ENCODE measurements at regions of chr14 and their contacts with region 1.

Region 1: DNA sequence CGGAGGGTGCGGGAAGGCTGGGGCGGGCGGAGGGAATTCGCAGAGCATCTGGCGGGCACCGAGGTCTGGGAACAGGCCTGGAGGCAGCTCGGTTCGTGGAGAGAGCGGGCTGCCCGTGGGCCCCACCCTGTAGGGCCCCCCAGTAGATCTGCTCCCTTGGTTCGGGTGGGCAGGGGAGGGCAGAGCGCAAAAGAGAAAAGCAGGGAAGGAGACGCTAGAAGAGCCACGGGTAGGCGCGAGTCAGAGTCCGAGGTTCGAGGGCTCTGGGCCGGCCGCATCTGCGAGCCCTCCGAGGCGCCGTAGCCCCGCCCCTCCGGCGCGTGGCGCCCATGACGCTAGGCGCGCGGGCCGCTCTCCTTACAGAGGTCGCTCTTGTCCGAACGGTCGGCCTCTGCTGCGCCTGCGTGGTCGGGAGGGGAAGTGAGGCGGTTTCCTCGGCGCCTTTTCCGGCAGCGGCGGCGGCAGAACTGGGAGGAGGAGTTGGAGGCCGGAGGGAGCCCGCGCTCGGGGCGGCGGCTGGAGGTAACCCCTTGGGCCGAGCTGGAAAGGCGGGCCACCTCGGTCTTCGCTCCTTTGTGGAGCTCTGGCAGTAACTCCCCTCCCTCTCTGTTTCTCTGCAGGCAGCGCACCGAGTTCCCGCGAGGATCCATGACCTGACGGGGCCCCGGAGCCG is at the start of gene ARF6:
- DNase-seq: peak; percentile 99
- H3K4me3 ChIP-seq: peak within 1 kb of the TSS; percentile 93 to 100 (median 96)
- H3K27ac ChIP-seq: peak within 1 kb of the TSS; percentile 100
- H3K4me1 ChIP-seq: peaks cover 9 to 49% (median 43%) of the 10 kb centered on the region in 4 donors
- H3K27me3 ChIP-seq: no peaks in the 10 kb centered on the region
- CTCF ChIP-seq: peak in 2 of 5 experiments; percentile 2 to 6
- EP300 ChIP-seq: no peak
- POLR2A ChIP-seq: peak; percentile 98
- total RNA-seq, gene ARF6: 70.3 to 120 (median 101) TPM

Region 2: DNA sequence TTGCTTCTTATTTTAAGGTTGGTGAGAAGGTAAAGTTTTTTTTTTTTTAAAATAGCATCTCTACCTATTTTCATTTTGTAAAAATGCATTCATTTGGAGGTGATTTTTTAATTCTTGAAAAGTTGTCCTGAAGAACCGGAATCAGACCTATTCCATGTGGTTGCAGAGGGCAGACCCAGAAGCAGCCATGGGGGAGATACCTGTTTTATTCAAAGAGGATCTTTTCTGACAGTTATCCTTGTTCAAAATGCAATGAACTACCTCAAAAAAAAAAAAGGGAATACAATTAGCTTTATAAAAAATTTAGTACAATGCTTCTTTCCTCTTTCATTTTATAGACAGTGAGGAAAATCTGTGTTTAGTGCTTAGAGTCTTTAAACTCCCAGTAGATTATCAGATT is 31.8 kb before region 1 on chr14:
- in situ Hi-C with region 1: no loop called
- intact Hi-C with region 1: loop called (anchors 1 kb)
- DNase-seq: no peak
- H3K4me3 ChIP-seq: peak overlapping the region in 3 of 4 donors; percentile 43 to 77 (median 50)
- H3K27ac ChIP-seq: peak overlapping the region; percentile 95 to 100 (median 98)
- H3K4me1 ChIP-seq: peaks cover 5 to 32% (median 21%) of the 10 kb centered on the region in 4 donors
- H3K27me3 ChIP-seq: no peaks in the 10 kb centered on the region
- CTCF ChIP-seq: no peak
- EP300 ChIP-seq: no peak
- POLR2A ChIP-seq: no peak

Region 3: GRCh38 chr14:49977126-49977841 is 84.5 kb after region 1 on chr14:
- in situ Hi-C with region 1: no loop called
- intact Hi-C with region 1: loop called (anchors 5 kb)
- DNase-seq: no peak
- H3K4me3 ChIP-seq: no peak overlapping the region
- H3K27ac ChIP-seq: peak overlapping the region; percentile 76 to 93 (median 86)
- H3K4me1 ChIP-seq: peaks cover 30 to 62% (median 42%) of the 10 kb centered on the region in 4 donors
- H3K27me3 ChIP-seq: no peaks in the 10 kb centered on the region
- CTCF ChIP-seq: no peak
- EP300 ChIP-seq: no peak
- POLR2A ChIP-seq: no peak

Region 4: DNA sequence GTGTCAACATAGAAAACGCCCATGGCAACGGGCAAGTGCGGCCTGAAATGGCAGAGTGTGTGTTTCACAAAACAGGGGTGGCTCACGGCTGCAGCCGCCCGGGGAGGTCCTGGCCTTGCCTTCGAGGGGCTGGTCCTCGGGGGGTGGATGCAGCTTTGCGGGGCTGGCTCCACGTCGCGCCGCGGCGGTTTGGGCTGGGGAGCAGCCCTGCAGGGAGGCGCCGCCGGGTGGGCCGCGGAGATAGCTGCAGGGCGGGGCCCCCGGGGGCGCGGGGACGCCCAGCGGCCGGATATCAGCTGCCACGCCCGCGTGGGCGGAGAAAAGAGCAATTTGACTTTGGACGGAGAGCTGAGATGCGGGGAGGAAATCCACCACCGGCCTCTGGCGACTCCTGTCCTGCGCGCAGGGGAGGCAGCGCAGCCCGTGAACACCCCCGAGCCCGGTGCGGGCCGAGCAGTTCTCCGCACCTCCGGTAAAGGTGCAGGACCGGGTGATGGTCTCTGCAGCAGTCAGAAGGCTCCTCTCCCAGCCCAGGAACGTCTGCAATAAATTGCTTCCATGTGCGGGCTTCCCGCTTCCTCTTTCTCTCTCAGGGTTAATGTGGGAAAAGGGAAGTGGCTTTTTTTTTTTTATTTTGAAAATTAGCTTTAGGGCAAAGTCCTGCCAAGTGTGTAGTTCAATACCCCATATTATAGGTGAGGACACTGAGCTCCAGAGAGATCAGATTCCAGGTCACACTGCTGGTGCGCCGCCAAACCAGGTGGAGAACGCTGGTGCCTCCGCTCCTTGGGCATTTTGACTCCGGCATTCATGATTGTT is 110.7 kb after region 1 on chr14:
- in situ Hi-C with region 1: loop called in 2 of 4 experiments (anchors 10 kb)
- intact Hi-C with region 1: loop called (anchors 10 kb)
- DNase-seq: peak; percentile 95
- H3K4me3 ChIP-seq: peak overlapping the region; percentile 16 to 64 (median 44)
- H3K27ac ChIP-seq: peak overlapping the region; percentile 90 to 94 (median 92)
- H3K4me1 ChIP-seq: peaks cover 42 to 70% (median 61%) of the 10 kb centered on the region in 4 donors
- H3K27me3 ChIP-seq: no peaks in the 10 kb centered on the region
- CTCF ChIP-seq: peak; percentile 8 to 57 (median 29)
- EP300 ChIP-seq: no peak
- POLR2A ChIP-seq: peak; percentile 91

Region 5: DNA sequence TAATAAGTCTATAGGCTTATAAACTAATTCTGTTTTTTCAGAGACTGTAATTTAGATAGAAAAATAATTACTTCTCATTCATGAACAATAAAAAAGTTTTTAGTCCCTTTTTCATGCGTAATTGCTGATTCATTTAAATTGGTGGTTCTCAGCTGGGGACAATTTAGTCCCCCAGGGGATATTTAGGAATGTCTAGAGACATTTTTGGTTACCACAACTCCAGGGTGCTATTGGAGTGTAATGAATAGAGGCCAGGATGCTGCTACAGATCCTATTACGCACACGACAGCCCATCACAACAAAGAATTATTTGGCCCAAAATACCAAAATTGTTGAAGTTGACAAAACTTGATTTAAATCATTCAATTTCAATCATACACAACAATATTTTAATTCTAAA is 246.4 kb after region 1 on chr14:
- in situ Hi-C with region 1: no loop called
- intact Hi-C with region 1: no loop called
- DNase-seq: no peak
- H3K4me3 ChIP-seq: no peak overlapping the region
- H3K27ac ChIP-seq: no peak overlapping the region
- H3K4me1 ChIP-seq: no peaks in the 10 kb centered on the region
- H3K27me3 ChIP-seq: no peaks in the 10 kb centered on the region
- CTCF ChIP-seq: no peak
- EP300 ChIP-seq: no peak
- POLR2A ChIP-seq: no peak